ENCODE measurements at regions of chr19 and their contacts with region 1.

Region 1: GRCh38 chr19:35140962-35141637 is 2.0 kb upstream of the FXYD7 start:
- DNase-seq: peak; percentile 89 to 99 (median 96)

Region 2: DNA sequence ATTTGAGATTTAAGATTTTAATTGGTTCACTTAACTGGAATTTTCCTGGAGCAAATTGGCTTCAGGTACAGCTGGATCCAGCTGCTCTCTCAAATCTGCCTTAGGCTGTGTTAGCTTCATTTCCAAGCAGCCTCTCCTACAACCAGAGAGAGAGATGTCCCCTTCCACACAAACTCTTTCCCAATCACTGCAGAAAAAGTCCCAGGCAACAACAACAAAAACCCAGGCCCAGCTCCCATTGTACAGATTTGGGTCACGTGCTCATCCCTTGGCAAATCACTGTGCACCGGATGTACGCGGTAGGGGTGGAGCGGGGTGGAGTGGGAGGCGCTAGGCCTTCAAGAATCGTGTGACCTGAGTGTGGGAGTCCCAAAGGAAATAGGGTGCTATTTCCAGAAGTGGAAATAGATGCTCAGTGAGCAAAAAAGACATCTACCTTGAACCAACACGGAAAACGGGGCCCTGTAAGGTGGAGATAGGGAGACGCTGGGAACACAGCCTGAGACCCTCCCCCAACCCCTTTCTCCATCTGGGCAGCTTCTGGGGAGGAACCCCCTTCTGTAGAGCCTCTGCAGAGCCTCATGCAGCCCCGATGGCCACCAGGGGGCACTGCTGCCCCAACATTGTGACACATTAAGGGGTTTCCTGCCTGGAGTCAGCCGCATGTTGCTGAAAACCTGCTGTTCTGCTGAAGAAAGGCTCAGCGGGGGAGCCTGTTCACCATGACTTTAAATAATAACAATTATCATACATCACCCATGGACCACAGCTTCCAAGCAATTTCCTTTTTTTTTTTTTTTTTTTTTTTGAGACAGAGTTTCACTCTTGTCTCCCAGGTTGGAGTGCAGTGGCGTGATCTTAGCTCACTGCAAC is 74.2 kb before region 1 on chr19:
- intact Hi-C with region 1: loop called (anchors 1 kb)
- DNase-seq: peak; percentile 77 to 98 (median 94)

Region 3: GRCh38 chr19:35090506-35091237 is 50.4 kb before region 1 on chr19:
- intact Hi-C with region 1: no loop called
- DNase-seq: peak in 6 of 10 donors; percentile 42 to 88 (median 58)

Measured in posterior cingulate gyrus (tissue), 11 donors.